ENCODE measurements at regions of chr2 and their contacts with region 1.

Region 1: DNA sequence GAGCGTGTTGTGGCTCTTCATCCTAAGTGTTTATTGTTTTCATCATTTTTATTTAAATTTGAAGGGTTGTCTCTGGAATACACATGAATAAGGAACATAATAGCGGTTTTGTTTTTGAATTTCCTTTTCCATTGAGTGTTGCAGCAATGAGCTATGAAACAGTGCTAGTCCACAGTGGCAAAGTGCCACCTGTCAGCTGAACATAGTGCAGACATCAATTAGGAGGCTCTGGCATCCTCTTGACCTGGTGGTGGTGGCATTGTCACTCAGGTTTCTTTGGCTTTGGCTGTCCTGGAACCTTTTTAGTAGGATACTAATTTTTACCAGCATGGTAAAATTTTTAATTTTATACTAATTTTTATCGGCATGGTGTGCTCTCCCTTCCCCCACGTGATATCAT is 63.2 kb downstream of the UGGT1 start:
- DNase-seq: no peak
- ATAC-seq: no peak
- H3K4me3 ChIP-seq: no peak overlapping the region
- H3K27ac ChIP-seq: no peak overlapping the region
- H3K4me1 ChIP-seq: no peaks in the 10 kb centered on the region
- H3K27me3 ChIP-seq: no peaks in the 10 kb centered on the region
- CTCF ChIP-seq: no peak
- EP300 ChIP-seq: no peak
- POLR2A ChIP-seq: no peak
- RAD21 ChIP-seq: no peak

Region 2: DNA sequence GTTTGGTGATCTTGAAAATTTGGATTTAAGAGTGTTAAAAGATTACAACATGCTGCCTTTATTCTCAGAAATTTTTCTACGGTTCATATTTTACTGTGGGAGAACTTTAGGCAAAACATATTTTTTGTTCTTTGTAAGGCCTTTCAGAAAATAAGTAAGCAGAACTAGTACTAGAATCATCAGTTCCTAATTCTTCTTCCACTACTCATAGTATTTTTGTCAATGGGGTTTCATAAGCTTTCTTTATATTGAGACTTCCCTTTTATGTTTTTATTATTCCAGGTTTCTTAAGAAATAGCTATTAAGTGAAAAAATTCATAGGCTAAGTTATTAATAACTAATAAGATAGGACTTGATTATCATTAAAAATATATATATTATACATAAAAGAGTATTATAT is 50.8 kb before region 1 on chr2:
- CTCF ChIA-PET with region 1: no interaction called
- POLR2A ChIA-PET with region 1: no interaction called
- in situ Hi-C with region 1: no loop called
- intact Hi-C with region 1: loop called (anchors 10 kb)
- DNase-seq: no peak
- ATAC-seq: no peak
- H3K4me3 ChIP-seq: no peak overlapping the region
- H3K27ac ChIP-seq: no peak overlapping the region
- H3K4me1 ChIP-seq: no peaks in the 10 kb centered on the region
- H3K27me3 ChIP-seq: no peaks in the 10 kb centered on the region
- CTCF ChIP-seq: no peak
- EP300 ChIP-seq: no peak
- POLR2A ChIP-seq: no peak
- RAD21 ChIP-seq: no peak

Region 3: DNA sequence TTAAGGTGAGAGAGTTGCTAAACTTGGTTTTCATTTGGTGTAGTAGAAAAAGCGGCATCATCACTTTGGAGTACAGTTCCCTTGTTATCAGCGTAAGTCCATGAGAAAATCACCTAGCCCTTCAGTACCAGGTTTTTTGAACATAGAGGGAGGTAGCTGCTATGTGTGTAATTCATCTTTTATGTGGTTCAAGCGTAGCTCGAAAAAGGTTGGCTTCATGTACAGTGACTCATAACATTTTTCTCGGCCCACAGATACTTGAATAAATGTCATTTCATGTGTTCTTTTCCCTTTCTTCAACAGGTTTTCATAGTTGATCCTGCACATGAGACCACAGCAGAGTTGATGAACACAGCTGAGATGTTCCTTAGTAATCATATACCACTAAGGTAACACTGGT is 19.7 kb before region 1 on chr2:
- CTCF ChIA-PET with region 1: no interaction called
- POLR2A ChIA-PET with region 1: no interaction called
- in situ Hi-C with region 1: no loop called
- intact Hi-C with region 1: no loop called
- DNase-seq: no peak
- ATAC-seq: no peak
- H3K4me3 ChIP-seq: no peak overlapping the region
- H3K27ac ChIP-seq: no peak overlapping the region
- H3K4me1 ChIP-seq: peaks cover 7% of the 10 kb centered on the region; the same call in 1 of the 2 replicates
- H3K27me3 ChIP-seq: no peaks in the 10 kb centered on the region
- CTCF ChIP-seq: no peak
- EP300 ChIP-seq: no peak
- POLR2A ChIP-seq: no peak
- RAD21 ChIP-seq: no peak

Measured in HepG2 (cell line).